Activated CD4-positive, alpha-beta T cell treated with anti-CD3 and anti-CD28 coated beads for 36 hours (primary cell): ENCODE measurements at regions of chr5 and their contacts with region 1.

Region 1: DNA sequence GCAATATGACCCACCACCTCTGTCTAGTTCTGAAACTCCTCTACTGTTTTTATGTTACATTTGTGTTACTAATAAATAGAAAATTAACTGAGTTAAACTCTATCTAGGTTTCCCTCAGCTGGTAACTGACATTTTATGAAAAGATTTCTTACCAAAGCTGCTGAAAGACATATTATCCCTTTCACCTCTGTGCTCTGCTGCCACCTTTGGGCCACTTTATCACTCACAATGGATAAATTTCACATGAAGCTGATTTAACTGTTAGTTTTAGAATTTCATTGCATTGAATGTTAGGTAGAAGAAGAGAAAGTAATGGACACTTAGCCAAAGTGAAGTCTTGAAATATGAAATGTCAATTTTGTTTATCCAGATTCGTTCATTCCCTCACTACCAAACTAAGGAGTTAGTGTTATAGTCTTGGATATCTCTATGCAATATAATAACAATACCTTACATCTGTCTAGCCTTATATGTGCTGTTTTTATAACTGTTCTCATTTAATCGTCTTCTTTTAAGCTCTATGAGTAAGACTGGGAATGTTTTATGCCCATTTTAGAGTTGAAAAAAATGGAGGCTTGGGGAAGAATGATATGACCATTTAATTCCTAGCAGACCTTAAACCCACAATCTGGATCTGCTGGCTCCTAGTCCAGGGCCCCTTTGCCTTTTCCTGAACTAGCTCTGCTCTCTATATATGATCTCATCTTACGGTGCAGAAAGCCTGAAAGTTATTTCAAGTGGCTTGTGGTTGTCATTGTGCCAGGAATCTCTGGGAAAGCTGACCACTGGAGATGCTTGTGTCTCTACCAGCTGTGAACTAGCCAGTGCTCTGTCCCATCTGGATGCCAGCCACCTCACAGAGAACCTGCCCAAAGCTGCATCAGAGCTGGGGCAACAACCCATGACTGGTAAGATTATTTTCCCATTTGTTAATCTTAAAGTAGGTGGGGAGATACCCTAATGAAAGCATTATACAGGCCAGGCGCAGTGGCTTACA is 97.1 kb downstream of the GOLPH3 start:
- DNase-seq: peak; percentile 71
- ATAC-seq: peak; percentile 49
- H3K4me3 Mint-ChIP-seq: no peak overlapping the region
- H3K27ac Mint-ChIP-seq: no peak overlapping the region
- H3K4me1 Mint-ChIP-seq: no peaks in the 10 kb centered on the region
- H3K27me3 Mint-ChIP-seq: no peaks in the 10 kb centered on the region

Region 2: DNA sequence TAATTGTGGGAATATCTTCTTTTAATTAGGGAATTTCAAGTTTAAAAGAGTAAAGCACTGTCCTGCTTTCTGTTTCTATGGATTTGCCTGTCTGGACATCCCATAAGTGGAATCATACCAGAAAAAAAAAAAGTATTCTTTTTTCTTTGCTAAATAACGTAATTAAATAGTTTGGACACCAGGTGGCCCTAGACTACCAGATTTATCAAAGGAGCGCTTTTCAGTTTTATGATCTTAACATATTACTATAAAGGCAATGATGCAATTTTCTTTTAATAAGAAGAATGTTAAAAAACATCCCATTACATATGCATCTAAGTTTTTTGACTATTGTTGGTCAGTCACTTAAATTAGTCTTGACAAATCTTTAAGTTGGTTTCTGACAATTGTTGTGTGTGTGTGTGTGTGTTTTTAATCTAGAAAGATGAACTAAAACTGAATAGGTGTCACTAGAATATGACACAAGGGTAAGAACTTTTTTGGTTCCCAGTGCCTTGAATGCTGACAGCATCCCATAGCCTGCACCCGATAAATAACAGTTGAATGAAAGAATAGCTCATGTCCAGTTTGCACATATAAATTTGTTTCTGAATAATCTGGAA is 495.4 kb before region 1 on chr5:
- CTCF ChIA-PET with region 1: interaction called, 3 read pairs
- POLR2A ChIA-PET with region 1: no interaction called
- intact Hi-C with region 1: loop called (anchors 1 kb)
- DNase-seq: no peak
- ATAC-seq: no peak
- H3K4me3 Mint-ChIP-seq: no peak overlapping the region
- H3K27ac Mint-ChIP-seq: no peak overlapping the region
- H3K4me1 Mint-ChIP-seq: no peaks in the 10 kb centered on the region
- H3K27me3 Mint-ChIP-seq: peaks cover 10% of the 10 kb centered on the region

Region 3: DNA sequence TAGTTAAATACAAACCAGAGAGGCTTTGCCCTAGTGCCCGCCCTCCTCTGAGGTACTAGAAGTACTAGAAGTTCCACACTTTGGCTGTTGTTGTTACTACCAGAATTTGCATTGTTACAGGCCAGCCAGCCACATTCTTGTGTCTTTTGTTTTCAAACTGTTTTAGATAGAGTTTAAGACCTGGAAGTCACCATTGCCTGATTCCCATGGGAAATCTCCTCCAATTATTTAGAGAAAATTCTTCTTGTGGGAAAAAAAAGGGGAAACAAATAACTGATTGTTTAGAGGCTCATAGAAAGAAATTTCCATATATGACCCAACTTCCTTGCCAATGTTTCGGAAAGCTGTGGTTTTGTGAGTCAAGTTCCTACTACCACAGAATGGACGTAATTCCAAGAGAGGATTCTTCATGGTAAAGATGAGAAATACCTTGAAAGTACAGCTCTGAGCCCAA is 155.1 kb before region 1 on chr5:
- CTCF ChIA-PET with region 1: interaction called, 10 read pairs
- POLR2A ChIA-PET with region 1: no interaction called
- intact Hi-C with region 1: loop called in 1 of 2 experiments (anchors 10 kb)
- DNase-seq: no peak
- ATAC-seq: no peak
- H3K4me3 Mint-ChIP-seq: no peak overlapping the region
- H3K27ac Mint-ChIP-seq: no peak overlapping the region
- H3K4me1 Mint-ChIP-seq: no peaks in the 10 kb centered on the region
- H3K27me3 Mint-ChIP-seq: no peaks in the 10 kb centered on the region

Region 4: DNA sequence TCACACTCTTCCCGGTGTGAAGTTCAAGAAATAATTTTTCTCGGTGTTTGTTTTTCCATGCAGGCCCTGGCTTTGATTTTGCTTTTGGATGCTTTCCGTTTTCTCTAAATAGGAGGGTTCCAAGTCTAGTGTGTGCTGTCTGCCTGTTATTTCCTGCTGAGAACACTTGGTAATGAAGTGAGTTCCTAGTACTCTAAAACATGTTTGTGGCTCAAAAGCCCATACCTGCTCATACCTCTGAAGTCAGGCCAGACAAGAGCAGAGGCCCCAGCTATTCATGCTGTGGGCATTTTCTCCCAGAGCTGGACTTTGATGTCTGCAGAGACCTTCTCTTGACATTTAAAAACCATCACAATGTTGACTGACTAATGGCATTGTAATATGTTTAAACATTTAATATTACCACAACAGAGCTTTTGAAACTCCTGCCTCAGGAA is 114.1 kb before region 1 on chr5:
- CTCF ChIA-PET with region 1: interaction called, 10 read pairs
- POLR2A ChIA-PET with region 1: no interaction called
- intact Hi-C with region 1: no loop called
- DNase-seq: no peak
- ATAC-seq: peak; percentile 39
- H3K4me3 Mint-ChIP-seq: no peak overlapping the region
- H3K27ac Mint-ChIP-seq: no peak overlapping the region
- H3K4me1 Mint-ChIP-seq: peaks cover 3% of the 10 kb centered on the region
- H3K27me3 Mint-ChIP-seq: no peaks in the 10 kb centered on the region

Region 5: DNA sequence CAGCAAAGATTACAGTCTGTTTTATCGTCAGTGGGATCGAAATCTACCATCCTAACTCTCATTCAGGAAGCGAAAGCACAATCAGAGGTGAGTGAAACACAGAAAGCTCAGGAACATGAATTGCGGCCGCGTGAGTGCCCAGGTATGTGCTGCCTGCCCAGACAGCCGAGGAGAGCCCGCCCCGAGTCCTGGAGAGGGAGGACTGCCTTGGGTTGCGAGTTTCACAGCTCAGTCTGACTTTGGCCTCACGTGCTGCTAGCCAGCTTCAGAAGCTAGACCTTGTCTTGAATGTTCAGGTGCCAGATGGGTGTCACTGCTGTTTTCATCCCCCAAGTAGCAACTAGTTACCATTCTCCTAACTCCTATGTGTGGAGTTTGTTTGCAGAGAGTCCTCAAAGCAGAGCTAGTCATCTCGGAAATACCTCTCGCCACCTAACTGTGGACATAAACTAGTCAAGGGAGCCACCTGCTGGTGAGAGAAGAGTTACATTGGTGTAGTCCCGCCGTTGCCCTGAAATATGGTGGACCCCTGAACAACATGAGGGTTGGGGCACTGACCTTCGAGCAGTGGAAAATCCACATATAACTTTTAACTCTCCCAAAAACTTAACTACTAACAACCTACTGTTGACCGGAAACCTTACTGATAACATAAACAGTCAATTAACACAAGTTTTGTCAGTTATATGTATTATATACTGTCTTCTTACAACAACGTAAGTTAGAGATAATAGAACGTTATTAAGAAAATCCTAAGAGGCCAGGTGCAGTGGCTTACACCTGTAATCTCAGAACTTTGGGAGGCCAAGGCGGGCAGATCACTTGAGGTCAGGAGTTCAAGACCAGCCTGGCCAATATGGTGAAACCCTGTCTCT is 16.2 kb after region 1 on chr5:
- CTCF ChIA-PET with region 1: interaction called, 30 read pairs
- POLR2A ChIA-PET with region 1: no interaction called
- intact Hi-C with region 1: no loop called
- DNase-seq: peak; percentile 82
- ATAC-seq: peak; percentile 97
- H3K4me3 Mint-ChIP-seq: no peak overlapping the region
- H3K27ac Mint-ChIP-seq: no peak overlapping the region
- H3K4me1 Mint-ChIP-seq: peaks cover 2% of the 10 kb centered on the region
- H3K27me3 Mint-ChIP-seq: no peaks in the 10 kb centered on the region

Region 6: DNA sequence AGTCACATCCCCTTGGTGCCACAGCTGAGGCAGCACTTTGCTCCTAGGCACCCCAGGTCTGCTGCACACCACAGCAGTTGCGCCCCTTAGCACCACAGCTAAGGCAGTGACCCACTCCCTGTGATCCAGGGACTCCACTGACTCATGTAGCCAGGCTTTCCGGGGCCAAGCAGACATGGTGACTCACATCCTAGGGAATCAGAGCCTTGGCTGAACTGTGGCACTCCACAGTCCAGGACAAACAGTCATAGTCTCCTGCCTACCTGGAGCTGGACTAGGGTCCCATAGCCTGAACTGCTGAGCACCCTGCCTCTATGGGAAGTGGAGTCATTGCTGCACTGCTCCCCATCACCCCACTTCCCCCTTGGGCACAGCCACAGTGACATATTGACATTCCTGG is 972.8 kb after region 1 on chr5:
- CTCF ChIA-PET with region 1: no interaction called
- POLR2A ChIA-PET with region 1: no interaction called
- intact Hi-C with region 1: no loop called
- DNase-seq: no peak
- ATAC-seq: no peak
- H3K4me3 Mint-ChIP-seq: no peak overlapping the region
- H3K27ac Mint-ChIP-seq: no peak overlapping the region
- H3K4me1 Mint-ChIP-seq: no peaks in the 10 kb centered on the region
- H3K27me3 Mint-ChIP-seq: no peaks in the 10 kb centered on the region